Esophagus muscularis mucosa (tissue), 4 donors: ENCODE measurements at regions of chr18 and their contacts with region 1.

Region 1: DNA sequence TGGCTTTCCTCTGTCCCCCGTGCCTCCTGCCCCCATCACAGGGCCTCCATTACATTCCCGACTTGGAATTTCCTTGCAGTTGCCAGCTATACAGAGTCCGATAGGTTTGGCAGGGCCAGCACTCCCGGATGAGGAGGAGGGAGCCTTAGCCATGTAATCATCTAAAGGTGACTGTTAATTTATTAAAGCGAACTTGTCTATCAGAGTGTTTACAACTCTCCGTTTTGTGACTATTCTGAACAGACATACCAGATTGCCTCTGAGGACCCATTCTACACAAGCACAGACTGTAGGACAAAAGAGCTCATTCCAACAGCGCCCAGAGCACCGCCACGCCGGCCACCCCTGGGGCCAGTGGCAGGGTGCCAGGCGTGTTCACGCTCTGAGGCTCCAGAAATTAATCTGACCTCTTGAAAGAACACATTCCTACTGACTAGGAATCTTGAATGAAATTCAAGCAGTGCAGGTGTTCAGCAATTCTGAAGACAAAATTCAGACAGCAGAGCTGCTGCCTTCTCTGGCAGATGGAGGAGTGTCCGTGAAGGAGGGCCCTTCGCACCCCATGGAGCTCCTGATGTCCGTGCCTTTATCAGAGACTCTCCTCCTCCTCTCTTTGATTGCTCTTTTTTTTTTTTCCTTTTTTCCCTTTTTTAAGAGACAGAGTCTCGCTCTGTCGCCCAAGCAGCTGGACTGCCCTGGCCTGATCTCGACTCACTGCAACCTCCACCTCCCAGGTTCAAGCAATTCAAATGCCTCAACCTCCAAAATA is 58.1 kb upstream of the RALBP1 start:
- DNase-seq: peak; percentile 83
- H3K4me3 ChIP-seq: peak overlapping the region; percentile 29 to 47 (median 38)
- H3K27ac ChIP-seq: peak overlapping the region; percentile 56 to 72 (median 66)
- H3K4me1 ChIP-seq: peaks cover 7 to 25% (median 23%) of the 10 kb centered on the region in 4 donors
- H3K27me3 ChIP-seq: no peaks in the 10 kb centered on the region
- CTCF ChIP-seq: no peak
- EP300 ChIP-seq: no peak
- POLR2A ChIP-seq: no peak

Region 2: DNA sequence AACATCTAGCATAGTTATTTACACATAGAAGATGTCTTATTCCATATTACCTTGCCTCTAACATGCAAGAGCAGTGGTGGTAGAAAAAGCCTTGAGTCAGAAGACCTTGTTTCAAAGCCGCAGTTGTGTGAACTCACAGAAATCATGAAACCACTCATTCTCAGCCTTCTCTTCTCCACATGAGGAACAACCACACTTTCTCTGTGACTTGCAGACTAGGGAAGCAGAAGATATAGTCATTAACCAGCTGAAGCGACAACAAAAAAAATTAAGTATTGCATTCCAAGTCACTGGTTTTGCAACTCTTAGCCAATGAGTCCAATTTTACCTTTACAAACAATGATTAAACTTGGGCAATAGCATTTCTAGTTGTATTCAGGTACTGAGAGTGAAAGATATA is 63.7 kb before region 1 on chr18:
- intact Hi-C with region 1: loop called (anchors 10 kb)
- DNase-seq: no peak
- H3K4me3 ChIP-seq: no peak overlapping the region
- H3K27ac ChIP-seq: no peak overlapping the region
- H3K4me1 ChIP-seq: peaks cover 3 to 50% (median 29%) of the 10 kb centered on the region in 4 donors
- H3K27me3 ChIP-seq: no peaks in the 10 kb centered on the region
- CTCF ChIP-seq: no peak
- EP300 ChIP-seq: no peak
- POLR2A ChIP-seq: no peak